Activated T-helper 1 cell treated with anti-CD3 and anti-CD28 coated beads, Interleukin-12 subunit alpha, Interleukin-12 subunit beta, Interleukin-2, Interleukin-4 antibody, amounts not matched to agents 30 ng/mL and 10 ng/mL and 1 ng/mL, durations not matched to agents 14 hours and 24 hours and 36 hours (primary cell): ENCODE measurements at regions of chr5 and their contacts with region 1.

Region 1: DNA sequence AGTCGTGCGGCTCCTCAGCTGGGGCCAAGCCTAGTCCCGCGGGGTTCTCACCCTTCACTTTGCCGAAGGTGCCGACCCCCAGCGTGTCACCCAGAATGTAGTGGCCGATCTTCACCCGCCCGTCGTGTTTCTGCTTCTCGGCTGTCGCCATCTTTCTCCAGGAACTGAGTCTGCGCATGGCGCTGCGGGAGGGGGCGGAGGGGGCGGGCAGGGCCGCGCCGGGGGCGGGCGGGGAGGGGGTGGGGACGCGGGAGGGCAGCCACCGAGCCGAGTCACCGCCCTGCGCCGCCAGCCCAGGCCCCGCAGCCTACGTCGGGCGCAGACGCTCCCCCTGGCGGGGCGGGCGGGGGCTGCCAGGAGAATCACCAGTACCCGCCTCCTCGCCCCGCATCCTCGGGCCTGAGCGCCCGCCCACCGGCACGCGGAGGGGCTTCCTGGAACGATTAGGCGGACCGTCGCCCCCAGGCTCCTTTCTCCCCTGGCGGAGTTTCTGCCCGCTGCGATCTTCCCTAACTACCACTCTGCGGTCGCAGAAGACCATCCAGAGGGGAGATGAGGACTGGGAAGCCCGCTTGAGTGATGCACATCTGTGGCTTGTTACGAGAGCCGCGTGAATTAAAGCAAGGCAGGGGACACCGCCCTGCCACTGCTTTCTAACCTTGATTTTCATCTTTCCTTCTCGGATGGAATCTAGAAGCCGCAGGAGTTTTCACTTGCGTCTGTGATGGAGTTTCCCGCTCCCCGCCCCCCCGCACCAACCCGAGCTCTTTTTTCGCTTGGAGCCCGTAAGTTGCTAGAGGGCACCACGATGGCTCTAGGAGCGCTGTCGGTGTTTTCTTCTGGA is at the start of gene PRKAA1:
- DNase-seq: peak; percentile 87
- H3K4me3 Mint-ChIP-seq: peak within 1 kb of the TSS; percentile 91
- H3K27ac Mint-ChIP-seq: peak within 1 kb of the TSS; percentile 96
- H3K4me1 Mint-ChIP-seq: peaks cover 41% of the 10 kb centered on the region
- H3K27me3 Mint-ChIP-seq: no peaks in the 10 kb centered on the region
- total RNA-seq, gene PRKAA1: 56.6 and 59.0 TPM in 2 replicates

Region 2: GRCh38 chr5:40813698-40814281 is 15.6 kb after region 1 on chr5:
- intact Hi-C with region 1: loop called (anchors 1 kb)
- DNase-seq: no peak
- H3K4me3 Mint-ChIP-seq: peak overlapping the region; percentile 47
- H3K27ac Mint-ChIP-seq: peak overlapping the region; percentile 49
- H3K4me1 Mint-ChIP-seq: peaks cover 13% of the 10 kb centered on the region
- H3K27me3 Mint-ChIP-seq: peaks cover 2% of the 10 kb centered on the region

Region 3: DNA sequence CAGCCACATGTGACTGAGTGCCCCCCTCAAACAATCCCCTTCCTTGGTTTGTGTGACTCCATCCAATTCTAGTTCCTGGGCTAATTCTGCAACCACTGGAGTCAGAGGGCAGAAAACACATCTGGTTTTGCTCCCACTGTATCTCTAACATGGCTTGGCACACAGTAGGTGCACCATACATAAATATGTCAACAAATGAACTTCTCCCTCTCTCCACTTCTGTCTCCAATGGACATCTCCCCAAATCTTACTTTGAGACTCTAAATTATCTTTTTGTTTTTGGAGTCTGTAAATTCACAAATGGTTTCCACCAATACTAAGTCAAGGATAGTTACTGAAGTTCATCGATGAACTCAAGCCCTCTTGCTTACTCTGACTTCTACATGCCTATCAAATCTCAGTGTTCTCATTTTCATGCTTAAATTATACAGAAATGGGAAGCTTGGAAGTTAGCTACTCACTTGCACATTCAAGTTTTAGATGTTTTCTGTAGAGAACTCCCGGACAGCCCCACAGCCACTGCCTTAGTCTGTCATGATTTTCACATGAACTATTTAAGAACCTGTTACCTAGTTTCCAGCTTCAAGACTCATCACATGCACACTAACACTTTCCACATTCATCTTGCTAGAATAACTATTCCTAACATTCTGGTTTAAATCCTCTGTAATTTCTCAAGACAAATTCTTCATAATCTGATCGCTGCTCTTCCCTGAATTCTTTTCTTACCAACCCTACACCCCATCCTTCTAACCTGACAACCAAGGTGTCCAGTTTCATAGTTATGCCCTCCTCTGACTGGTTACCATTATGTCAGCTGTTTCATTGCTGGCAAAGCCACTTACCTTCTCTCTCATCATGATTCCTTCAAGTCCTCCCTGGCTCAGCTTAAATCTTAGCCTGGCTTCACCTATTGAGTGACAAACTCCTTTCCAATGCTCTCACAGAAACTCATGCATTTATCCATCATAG is 30.7 kb after region 1 on chr5:
- intact Hi-C with region 1: loop called (anchors 1 kb)
- DNase-seq: no peak
- H3K4me3 Mint-ChIP-seq: peak overlapping the region; percentile 17
- H3K27ac Mint-ChIP-seq: peak overlapping the region; percentile 30
- H3K4me1 Mint-ChIP-seq: peaks cover 62% of the 10 kb centered on the region
- H3K27me3 Mint-ChIP-seq: no peaks in the 10 kb centered on the region

Region 4: GRCh38 chr5:41087461-41087860 is 289.2 kb after region 1 on chr5:
- intact Hi-C with region 1: no loop called
- DNase-seq: no peak
- H3K4me3 Mint-ChIP-seq: no peak overlapping the region
- H3K27ac Mint-ChIP-seq: no peak overlapping the region
- H3K4me1 Mint-ChIP-seq: no peaks in the 10 kb centered on the region
- H3K27me3 Mint-ChIP-seq: no peaks in the 10 kb centered on the region